MCF 10A (cell line): ENCODE measurements at regions of chr16 and their contacts with region 1.

Region 1: DNA sequence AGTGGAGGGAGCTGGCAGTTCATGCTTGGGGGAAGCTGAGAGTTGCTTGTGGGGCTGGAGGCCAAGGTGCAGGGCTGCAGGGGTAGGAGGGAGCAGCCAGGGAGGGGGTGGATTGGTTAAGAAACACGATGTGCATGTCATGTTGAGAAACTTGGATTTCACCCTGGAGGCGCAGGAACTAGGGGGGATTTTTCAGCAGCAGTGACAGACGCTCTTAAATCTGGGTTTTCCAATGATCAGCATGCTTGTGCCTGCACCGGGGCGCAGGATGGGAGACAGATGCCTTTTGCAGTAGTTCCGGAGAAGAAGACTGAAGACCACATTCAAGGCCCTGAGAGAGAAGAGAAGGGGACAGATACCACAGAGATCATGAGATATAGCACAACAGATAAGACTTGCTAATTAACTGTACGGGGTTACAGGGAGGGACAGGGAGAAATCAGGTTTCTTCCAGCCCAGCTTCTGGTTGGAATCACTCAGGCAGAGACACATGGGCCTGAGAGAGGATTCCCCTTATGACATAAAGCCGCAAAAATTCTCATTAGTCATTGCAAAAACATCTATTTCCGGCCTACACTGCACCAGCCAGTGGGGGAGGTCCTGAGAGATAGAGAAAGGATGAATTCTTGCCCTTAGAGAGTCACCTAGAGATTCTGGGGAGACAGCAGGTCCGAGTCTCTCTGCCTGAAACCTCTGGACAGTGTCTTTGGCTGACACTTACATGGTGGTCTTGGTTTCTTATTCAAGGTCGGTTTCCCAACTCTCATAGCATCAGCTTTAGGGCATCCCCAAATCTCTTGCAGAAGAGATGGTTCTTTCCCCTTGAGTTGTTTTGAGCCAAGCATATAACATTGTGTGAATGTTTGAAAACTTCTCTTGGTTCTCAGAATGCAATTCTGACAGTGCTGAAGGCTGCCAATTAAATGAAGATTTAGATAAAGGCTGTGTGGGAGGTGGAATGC is 27.1 kb downstream of the CDH13 start:
- DNase-seq: peak; percentile 89
- H3K4me3 Mint-ChIP-seq: peak overlapping the region; percentile 59
- H3K27ac Mint-ChIP-seq: peak overlapping the region; percentile 88
- H3K4me1 Mint-ChIP-seq: peaks cover 52% of the 10 kb centered on the region
- H3K27me3 Mint-ChIP-seq: no peaks in the 10 kb centered on the region
- CTCF ChIP-seq: no peak

Region 2: DNA sequence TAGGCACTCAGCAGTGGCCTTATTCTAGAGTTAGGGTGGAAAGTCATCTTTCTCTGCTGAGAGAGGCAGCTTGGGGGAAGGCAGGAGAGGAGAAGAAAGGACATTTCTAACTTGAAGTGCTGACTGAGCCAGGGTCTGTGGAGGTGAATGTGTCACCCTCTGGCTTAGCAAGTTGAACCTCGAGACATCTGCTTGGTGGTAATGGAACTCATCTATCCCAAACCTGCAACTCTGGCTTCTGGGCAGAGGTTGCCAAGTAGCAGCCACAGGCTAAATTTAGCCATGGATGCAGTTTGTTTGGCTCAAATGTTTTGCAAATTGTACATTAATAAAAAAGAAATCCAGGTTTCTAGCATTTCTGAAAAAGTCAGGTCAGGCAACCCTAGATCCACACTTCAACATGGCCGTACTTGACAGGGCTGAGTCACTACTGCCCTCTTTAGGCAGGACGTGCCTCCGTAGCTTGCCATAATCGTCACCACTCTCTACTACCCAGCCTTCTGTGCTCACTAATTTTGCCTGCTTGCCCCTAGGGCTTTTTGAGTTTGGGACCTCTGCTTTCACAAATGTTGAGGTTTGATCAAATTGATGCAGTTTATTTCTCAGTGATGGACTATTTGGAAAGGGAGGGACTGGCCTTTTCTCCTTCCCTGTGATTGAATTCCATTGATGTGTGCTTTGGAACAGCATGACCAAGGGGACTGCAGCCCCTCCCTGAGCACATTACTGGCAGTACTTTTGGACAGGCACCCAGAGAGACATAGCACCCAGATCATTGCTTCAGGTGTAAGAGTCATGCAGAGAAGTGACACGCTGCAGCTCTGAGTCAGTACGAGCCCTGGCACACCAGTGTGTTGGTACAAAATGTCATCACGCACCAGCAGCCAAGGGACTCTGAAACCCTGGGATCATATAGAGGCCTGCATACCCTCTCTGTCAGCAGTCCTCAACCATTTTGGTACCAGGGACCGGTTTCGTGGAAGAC is 21.8 kb before region 1 on chr16:
- CTCF ChIA-PET with region 1: interaction called, 34 read pairs
- POLR2A ChIA-PET with region 1: interaction called, 14 read pairs
- intact Hi-C with region 1: no loop called
- DNase-seq: peak; percentile 73
- H3K4me3 Mint-ChIP-seq: peak overlapping the region; percentile 29
- H3K27ac Mint-ChIP-seq: peak overlapping the region; percentile 96
- H3K4me1 Mint-ChIP-seq: peaks cover 60% of the 10 kb centered on the region
- H3K27me3 Mint-ChIP-seq: no peaks in the 10 kb centered on the region
- CTCF ChIP-seq: no peak

Region 3: GRCh38 chr16:82639666-82640336 is 14.0 kb before region 1 on chr16:
- CTCF ChIA-PET with region 1: interaction called, 87 read pairs
- POLR2A ChIA-PET with region 1: interaction called, 3 read pairs
- intact Hi-C with region 1: no loop called
- DNase-seq: peak; percentile 73
- H3K4me3 Mint-ChIP-seq: no peak overlapping the region
- H3K27ac Mint-ChIP-seq: no peak overlapping the region
- H3K4me1 Mint-ChIP-seq: peaks cover 36% of the 10 kb centered on the region
- H3K27me3 Mint-ChIP-seq: no peaks in the 10 kb centered on the region
- CTCF ChIP-seq: peak; percentile 82

Region 4: GRCh38 chr16:82681592-82681991 is 27.8 kb after region 1 on chr16:
- CTCF ChIA-PET with region 1: no interaction called
- POLR2A ChIA-PET with region 1: no interaction called
- intact Hi-C with region 1: no loop called
- DNase-seq: no peak
- H3K4me3 Mint-ChIP-seq: no peak overlapping the region
- H3K27ac Mint-ChIP-seq: no peak overlapping the region
- H3K4me1 Mint-ChIP-seq: no peaks in the 10 kb centered on the region
- H3K27me3 Mint-ChIP-seq: no peaks in the 10 kb centered on the region
- CTCF ChIP-seq: no peak

Region 5: DNA sequence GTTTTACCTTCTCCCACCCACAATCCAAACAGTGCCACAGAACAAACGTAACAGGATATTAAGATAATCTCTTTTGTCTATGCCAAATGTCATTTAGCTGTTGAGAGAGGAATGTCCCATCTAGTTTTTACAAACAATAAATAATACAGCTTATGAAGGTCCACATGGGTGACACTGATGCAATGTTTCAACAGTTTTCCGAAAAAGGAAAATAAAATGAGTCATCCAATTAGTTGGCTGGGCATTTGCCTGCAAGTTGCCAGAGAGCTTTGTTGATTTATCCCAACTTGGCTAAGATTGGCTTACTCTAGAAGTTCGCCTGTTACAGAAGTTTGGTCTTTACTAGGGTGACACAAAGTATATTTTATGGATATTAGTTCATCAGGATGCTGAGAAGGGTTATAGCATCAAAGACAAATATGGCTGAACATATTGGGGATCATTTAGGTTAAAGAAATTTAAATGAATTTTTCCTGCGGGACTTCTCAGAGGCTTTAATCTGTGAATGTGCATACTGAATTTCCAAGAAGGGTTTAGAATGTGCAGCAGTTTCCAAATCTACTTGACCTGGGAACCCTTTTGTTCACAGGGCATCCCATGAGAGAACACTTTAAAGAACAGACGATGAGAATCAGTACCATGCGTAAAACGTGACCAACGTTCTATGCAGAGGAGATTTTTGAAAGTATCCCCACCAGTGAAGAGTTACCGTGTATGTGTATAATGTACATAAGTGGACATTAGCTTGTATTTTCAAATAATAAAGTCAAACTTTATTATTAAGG is 46.1 kb after region 1 on chr16:
- CTCF ChIA-PET with region 1: interaction called, 3 read pairs
- POLR2A ChIA-PET with region 1: interaction called, 3 read pairs
- intact Hi-C with region 1: loop called (anchors 5 kb)
- DNase-seq: peak; percentile 87
- H3K4me3 Mint-ChIP-seq: peak overlapping the region; percentile 7
- H3K27ac Mint-ChIP-seq: peak overlapping the region; percentile 96
- H3K4me1 Mint-ChIP-seq: peaks cover 27% of the 10 kb centered on the region
- H3K27me3 Mint-ChIP-seq: no peaks in the 10 kb centered on the region
- CTCF ChIP-seq: no peak

Region 6: DNA sequence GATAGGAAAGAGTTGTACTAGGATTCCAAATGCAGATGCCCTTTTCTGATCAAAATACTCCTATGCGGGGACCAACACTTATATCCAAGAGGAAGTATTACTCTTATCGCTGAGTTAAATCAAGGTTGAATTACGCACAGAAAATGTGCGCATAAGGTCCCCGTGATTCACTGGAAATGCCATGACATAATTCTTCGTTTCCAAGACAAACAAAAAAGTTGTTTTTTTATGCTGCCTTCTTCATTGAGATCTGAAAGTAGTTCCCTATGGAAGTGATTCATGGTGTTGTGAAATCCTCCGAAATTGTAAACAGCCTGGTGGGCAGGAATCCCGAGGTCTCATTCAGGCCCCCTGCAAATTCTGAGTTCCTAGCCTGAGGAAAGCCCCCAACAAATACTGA is 690.2 kb after region 1 on chr16:
- CTCF ChIA-PET with region 1: no interaction called
- POLR2A ChIA-PET with region 1: no interaction called
- intact Hi-C with region 1: loop called (anchors 5 kb)
- DNase-seq: peak; percentile 88
- H3K4me3 Mint-ChIP-seq: no peak overlapping the region
- H3K27ac Mint-ChIP-seq: peak overlapping the region; percentile 93
- H3K4me1 Mint-ChIP-seq: peaks cover 14% of the 10 kb centered on the region
- H3K27me3 Mint-ChIP-seq: no peaks in the 10 kb centered on the region
- CTCF ChIP-seq: no peak